Right ventricle myocardium superior (tissue), 1 donor: ENCODE measurements at regions of chr12 and their contacts with region 1.

Region 1: DNA sequence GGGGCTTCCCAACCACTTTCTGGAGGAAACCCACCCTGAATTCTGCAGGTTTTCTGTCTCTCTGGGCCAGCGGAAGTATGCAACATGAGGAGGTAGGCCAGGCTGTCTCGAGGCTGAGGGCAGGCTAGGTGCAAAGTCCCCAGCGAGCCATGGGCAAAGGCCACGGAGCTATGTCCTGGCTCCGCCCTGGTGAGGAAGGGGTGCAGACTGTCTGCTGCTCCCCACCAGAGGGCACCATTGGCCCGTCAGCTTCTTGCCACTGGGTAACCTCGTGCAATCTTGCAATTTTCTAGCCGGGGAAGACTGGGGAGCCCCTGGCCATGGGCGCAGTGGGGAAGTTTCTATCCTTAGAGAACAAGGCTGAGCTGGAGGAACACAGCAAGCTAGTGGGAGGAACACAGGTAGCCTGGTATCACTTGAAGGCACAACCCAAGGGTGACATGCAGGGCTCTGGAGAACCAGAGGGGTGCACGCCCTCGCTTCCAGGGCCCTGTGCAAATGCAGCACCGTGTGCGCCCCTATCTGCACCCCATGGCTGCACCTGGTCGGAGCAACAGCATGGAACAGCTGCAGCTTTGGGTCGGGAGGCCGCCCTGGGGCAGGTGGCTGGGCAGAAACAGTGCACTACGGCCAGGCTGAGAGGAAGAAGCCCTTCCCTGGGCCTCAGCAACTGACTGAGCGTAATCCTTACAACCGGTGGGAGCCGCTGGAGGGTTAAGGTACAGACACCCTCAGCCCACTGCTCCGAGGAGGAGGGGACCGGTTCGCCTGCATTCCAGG is 27.6 kb upstream of the RPLP0 start:
- DNase-seq: peak; percentile 91
- ATAC-seq: peak; percentile 80

Region 2: GRCh38 chr12:119375075-119375882 is 853.2 kb before region 1 on chr12:
- intact Hi-C with region 1: no loop called
- DNase-seq: no peak
- ATAC-seq: no peak

Region 3: DNA sequence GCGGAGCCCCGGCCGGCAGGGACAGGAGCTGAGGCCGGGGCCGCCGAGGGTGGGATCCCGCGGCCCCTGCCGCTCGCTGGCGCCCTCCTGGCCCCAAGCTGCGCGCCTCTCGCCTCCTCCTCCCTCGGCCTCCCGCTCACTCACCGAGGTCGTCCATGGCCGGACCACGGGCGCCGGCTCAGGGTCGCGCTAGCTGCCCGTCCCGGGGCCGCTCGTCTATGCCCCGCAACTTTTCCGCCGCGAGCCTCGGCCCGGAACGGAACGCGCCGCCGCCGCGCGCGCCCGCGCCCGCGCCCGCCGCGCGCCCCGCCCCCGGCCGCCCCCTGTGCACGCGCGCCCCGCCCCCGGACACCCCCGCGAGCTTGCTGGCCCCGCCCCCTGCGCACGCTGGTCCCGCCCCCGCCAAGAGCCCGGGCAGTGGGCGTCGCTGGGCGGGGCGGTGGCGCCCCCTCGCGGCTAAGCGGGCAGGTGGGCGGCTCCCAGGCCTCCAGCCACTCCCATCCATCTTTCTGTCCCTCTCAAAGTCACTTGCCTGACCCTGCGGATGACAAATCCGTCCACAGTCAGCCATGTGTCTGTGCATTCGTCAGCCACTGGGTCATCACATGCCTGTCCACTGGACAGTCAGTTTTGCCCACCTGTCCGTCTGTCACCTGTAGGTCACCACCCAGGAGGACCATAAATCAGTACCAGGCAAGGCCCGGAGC is 37.1 kb after region 1 on chr12 and contains the start of gene PXN:
- intact Hi-C with region 1: loop called (anchors 1 kb)
- DNase-seq: peak; percentile 93
- ATAC-seq: peak; percentile 88
- total RNA-seq, gene PXN: 47.1 TPM